GM12878 (cell line): ENCODE measurements at regions of chr15 and their contacts with region 1.

Region 1: GRCh38 chr15:59313641-59314332 is 58.9 kb downstream of the MYO1E start:
- DNase-seq: peak; percentile 81
- ATAC-seq: peak; percentile 96
- H3K4me3 ChIP-seq: no peak overlapping the region; the same call in 1 of the 2 replicates
- H3K27ac ChIP-seq: peak overlapping the region; percentile 81
- H3K4me1 ChIP-seq: peaks cover 67% of the 10 kb centered on the region
- H3K27me3 ChIP-seq: no peaks in the 10 kb centered on the region
- CTCF ChIP-seq: no peak
- EP300 ChIP-seq: peak; percentile 70 to 79; a peak in 2 of 4 replicates
- POLR2A ChIP-seq: 0 out of 2 replicates have a peak, but pooled peaks have one; percentile 31
- RAD21 ChIP-seq: no peak

Region 2: GRCh38 chr15:59232476-59232875 is 81.3 kb before region 1 on chr15:
- CTCF ChIA-PET with region 1: no interaction called
- POLR2A ChIA-PET with region 1: no interaction called
- RAD21 ChIA-PET with region 1: no interaction called
- SMC1A ChIA-PET with region 1: no interaction called
- in situ Hi-C with region 1: no loop called
- intact Hi-C with region 1: no loop called
- DNase-seq: no peak
- ATAC-seq: no peak
- H3K4me3 ChIP-seq: no peak overlapping the region
- H3K27ac ChIP-seq: no peak overlapping the region
- H3K4me1 ChIP-seq: peaks cover 7% of the 10 kb centered on the region
- H3K27me3 ChIP-seq: no peaks in the 10 kb centered on the region
- CTCF ChIP-seq: no peak
- EP300 ChIP-seq: no peak
- POLR2A ChIP-seq: no peak
- RAD21 ChIP-seq: no peak

Region 3: GRCh38 chr15:59329570-59330350 is 16.0 kb after region 1 on chr15:
- CTCF ChIA-PET with region 1: interaction called, 5 read pairs
- POLR2A ChIA-PET with region 1: interaction called, 14 read pairs
- RAD21 ChIA-PET with region 1: interaction called, 6 read pairs
- SMC1A ChIA-PET with region 1: interaction called, 46 read pairs
- in situ Hi-C with region 1: no loop called
- intact Hi-C with region 1: no loop called
- DNase-seq: no peak
- ATAC-seq: no peak; the same call in 2 of the 3 replicates
- H3K4me3 ChIP-seq: no peak overlapping the region
- H3K27ac ChIP-seq: peak overlapping the region; percentile 48; the same call in 1 of the 2 replicates
- H3K4me1 ChIP-seq: peaks cover 80% of the 10 kb centered on the region
- H3K27me3 ChIP-seq: no peaks in the 10 kb centered on the region
- CTCF ChIP-seq: no peak
- EP300 ChIP-seq: no peak
- POLR2A ChIP-seq: no peak
- RAD21 ChIP-seq: no peak

Region 4: GRCh38 chr15:59372352-59373211 is 58.8 kb after region 1 on chr15 and contains the start of gene MYO1E:
- CTCF ChIA-PET with region 1: interaction called, 4 read pairs
- POLR2A ChIA-PET with region 1: interaction called, 7 read pairs
- RAD21 ChIA-PET with region 1: interaction called, 7 read pairs
- SMC1A ChIA-PET with region 1: interaction called, 10 read pairs
- in situ Hi-C with region 1: no loop called
- intact Hi-C with region 1: no loop called
- DNase-seq: peak; percentile 72
- ATAC-seq: peak; percentile 76
- H3K4me3 ChIP-seq: peak within 1 kb of the TSS; percentile 75
- H3K27ac ChIP-seq: peak within 1 kb of the TSS; percentile 95
- H3K4me1 ChIP-seq: peaks cover 3% of the 10 kb centered on the region
- H3K27me3 ChIP-seq: no peaks in the 10 kb centered on the region
- CTCF ChIP-seq: no peak
- EP300 ChIP-seq: no peak
- POLR2A ChIP-seq: peak; percentile 88
- RAD21 ChIP-seq: no peak
- polyA plus RNA-seq, gene MYO1E: 10.3 to 27.5 TPM

Region 5: DNA sequence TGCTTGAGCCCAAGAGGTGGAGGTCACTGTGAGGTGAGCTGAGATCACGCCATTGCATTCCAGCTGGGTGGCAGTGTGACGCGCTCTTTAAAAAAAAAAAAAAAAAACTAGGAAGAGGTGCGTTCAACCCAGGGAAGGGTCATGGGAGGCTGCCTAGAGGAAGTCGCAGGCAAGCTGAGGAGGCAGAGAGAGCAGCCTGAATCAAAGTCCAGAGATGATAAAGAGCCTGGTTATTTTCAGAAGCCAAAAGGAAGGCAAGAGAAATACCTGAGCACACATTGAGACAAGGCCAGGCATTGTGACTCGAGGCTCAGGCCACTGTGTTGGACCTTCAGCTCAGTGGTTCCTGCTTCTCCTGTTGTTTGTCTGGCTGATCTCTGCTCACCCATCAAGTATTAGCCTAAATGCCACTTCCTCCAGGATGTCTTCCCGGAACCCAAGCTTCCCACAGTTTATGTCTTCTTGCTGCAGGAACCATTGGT is 281.7 kb after region 1 on chr15:
- CTCF ChIA-PET with region 1: no interaction called
- POLR2A ChIA-PET with region 1: no interaction called
- RAD21 ChIA-PET with region 1: no interaction called
- SMC1A ChIA-PET with region 1: no interaction called
- in situ Hi-C with region 1: no loop called
- intact Hi-C with region 1: no loop called
- DNase-seq: no peak
- ATAC-seq: no peak
- H3K4me3 ChIP-seq: no peak overlapping the region
- H3K27ac ChIP-seq: no peak overlapping the region
- H3K4me1 ChIP-seq: peaks cover 6% of the 10 kb centered on the region; the same call in 1 of the 2 replicates
- H3K27me3 ChIP-seq: no peaks in the 10 kb centered on the region
- CTCF ChIP-seq: no peak
- EP300 ChIP-seq: no peak
- POLR2A ChIP-seq: no peak
- RAD21 ChIP-seq: no peak